ENCODE measurements at regions of chr7 and their contacts with region 1.

Region 1: DNA sequence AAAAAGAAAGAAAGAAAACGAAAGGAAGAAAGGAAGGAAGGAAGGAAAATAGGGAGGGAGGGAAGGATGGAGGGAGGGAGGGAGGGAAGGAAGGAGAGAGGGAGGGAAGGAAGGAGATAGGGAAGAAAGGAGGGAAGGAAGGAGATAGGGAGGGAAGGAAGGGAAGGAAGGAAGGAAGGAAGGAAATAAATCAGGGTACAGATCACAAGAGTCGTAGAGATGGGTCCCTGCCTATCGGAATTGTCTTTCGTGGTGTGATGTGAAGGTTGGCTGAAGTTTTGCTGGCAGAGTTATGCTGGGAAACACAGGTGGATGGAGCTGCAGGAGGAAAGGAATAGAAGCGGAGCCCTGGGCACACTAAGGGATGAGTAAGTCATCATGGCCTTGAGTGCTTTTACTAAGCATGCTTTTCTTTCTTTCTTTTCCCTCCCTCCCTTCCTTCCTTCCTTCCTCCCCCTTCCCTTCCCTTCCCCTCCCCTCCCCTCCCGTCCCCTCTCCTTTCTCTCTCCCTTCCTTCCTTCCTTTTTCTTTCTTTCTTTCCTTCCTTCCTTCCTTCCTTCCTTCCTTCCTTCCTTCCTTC is 11.9 kb upstream of the TPST1 start:
- DNase-seq: no peak
- H3K4me3 ChIP-seq: no peak overlapping the region
- H3K27ac ChIP-seq: no peak overlapping the region
- H3K4me1 ChIP-seq: no peaks in the 10 kb centered on the region
- H3K27me3 ChIP-seq: no peaks in the 10 kb centered on the region
- CTCF ChIP-seq: no peak

Region 2: GRCh38 chr7:66627151-66627681 is 434.0 kb after region 1 on chr7:
- CTCF ChIA-PET with region 1: no interaction called
- POLR2A ChIA-PET with region 1: interaction called, 35 read pairs
- intact Hi-C with region 1: no loop called
- DNase-seq: peak; percentile 16
- H3K4me3 ChIP-seq: no peak overlapping the region
- H3K27ac ChIP-seq: no peak overlapping the region
- H3K4me1 ChIP-seq: peaks cover 8% of the 10 kb centered on the region
- H3K27me3 ChIP-seq: no peaks in the 10 kb centered on the region
- CTCF ChIP-seq: no peak